Activated CD8-positive, alpha-beta T cell treated with anti-CD3 and anti-CD28 coated beads, Interleukin-2, amount 10 ng/mL, durations not matched to agents 7 days and 5 days (primary cell): ENCODE measurements at regions of chr14 and their contacts with region 1.

Region 1: DNA sequence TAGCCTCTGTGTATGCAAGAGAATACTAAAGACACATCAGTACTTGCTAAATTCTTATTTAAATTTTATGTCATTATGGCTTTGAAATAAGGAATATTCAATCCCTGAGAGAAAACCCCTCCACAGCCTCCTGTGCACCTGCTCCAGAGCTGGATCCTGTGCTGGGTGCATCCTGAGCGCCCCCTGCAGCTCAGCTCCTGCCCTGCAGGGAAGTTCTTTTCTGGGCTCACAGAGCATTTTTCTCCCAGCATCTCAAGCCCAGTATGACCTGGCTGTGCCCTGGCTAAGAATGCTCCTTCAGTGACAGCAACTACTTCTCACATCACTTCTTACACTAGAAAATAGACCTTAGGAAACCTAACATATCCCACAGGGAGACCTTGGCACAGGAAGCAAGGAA is 1211.7 kb downstream of the TMEM121 start:
- DNase-seq: peak; percentile 39
- ATAC-seq: no peak
- H3K4me3 Mint-ChIP-seq: no peak overlapping the region
- H3K27ac Mint-ChIP-seq: no peak overlapping the region
- H3K4me1 Mint-ChIP-seq: peaks cover 16% of the 10 kb centered on the region
- H3K27me3 Mint-ChIP-seq: peaks cover 25% of the 10 kb centered on the region

Region 2: GRCh38 chr14:106625186-106625585 is 112.9 kb before region 1 on chr14:
- CTCF ChIA-PET with region 1: no interaction called
- POLR2A ChIA-PET with region 1: no interaction called
- DNase-seq: no peak
- ATAC-seq: no peak
- H3K4me3 Mint-ChIP-seq: no peak overlapping the region
- H3K27ac Mint-ChIP-seq: no peak overlapping the region
- H3K4me1 Mint-ChIP-seq: peaks cover 35% of the 10 kb centered on the region
- H3K27me3 Mint-ChIP-seq: peaks cover 47% of the 10 kb centered on the region

Region 3: GRCh38 chr14:106691601-106692291 is 46.3 kb before region 1 on chr14:
- CTCF ChIA-PET with region 1: interaction called, 13 read pairs
- POLR2A ChIA-PET with region 1: no interaction called
- DNase-seq: peak; percentile 72
- ATAC-seq: peak; percentile 16
- H3K4me3 Mint-ChIP-seq: no peak overlapping the region
- H3K27ac Mint-ChIP-seq: no peak overlapping the region
- H3K4me1 Mint-ChIP-seq: peaks cover 32% of the 10 kb centered on the region
- H3K27me3 Mint-ChIP-seq: peaks cover 10% of the 10 kb centered on the region

Region 4: GRCh38 chr14:106766145-106766544 is 28.1 kb after region 1 on chr14:
- CTCF ChIA-PET with region 1: interaction called, 38 read pairs
- POLR2A ChIA-PET with region 1: no interaction called
- DNase-seq: no peak
- ATAC-seq: no peak
- H3K4me3 Mint-ChIP-seq: no peak overlapping the region
- H3K27ac Mint-ChIP-seq: no peak overlapping the region
- H3K4me1 Mint-ChIP-seq: peaks cover 49% of the 10 kb centered on the region
- H3K27me3 Mint-ChIP-seq: peaks cover 5% of the 10 kb centered on the region